PC-3 (cell line): ENCODE measurements at regions of chr10 and their contacts with region 1.

Region 1: GRCh38 chr10:73218431-73219191 is 28.4 kb downstream of the DNAJC9 start:
- DNase-seq: peak; percentile 76
- ATAC-seq: peak; percentile 90
- H3K4me3 ChIP-seq: no peak overlapping the region
- H3K27ac ChIP-seq: no peak overlapping the region
- H3K4me1 ChIP-seq: no peaks in the 10 kb centered on the region
- H3K27me3 ChIP-seq: no peaks in the 10 kb centered on the region
- CTCF ChIP-seq: peak; percentile 99

Region 2: GRCh38 chr10:73156054-73156453 is 62.6 kb before region 1 on chr10:
- CTCF ChIA-PET with region 1: no interaction called
- POLR2A ChIA-PET with region 1: no interaction called
- intact Hi-C with region 1: no loop called
- DNase-seq: no peak
- ATAC-seq: no peak
- H3K4me3 ChIP-seq: no peak overlapping the region
- H3K27ac ChIP-seq: no peak overlapping the region
- H3K4me1 ChIP-seq: no peaks in the 10 kb centered on the region
- H3K27me3 ChIP-seq: no peaks in the 10 kb centered on the region
- CTCF ChIP-seq: no peak

Region 3: GRCh38 chr10:73167783-73168464 is 50.7 kb before region 1 on chr10 and contains the starts of genes ECD and FAM149B1:
- CTCF ChIA-PET with region 1: interaction called, 5 read pairs
- POLR2A ChIA-PET with region 1: no interaction called
- intact Hi-C with region 1: loop called (anchors 1 kb)
- DNase-seq: peak; percentile 100
- ATAC-seq: peak; percentile 93
- H3K4me3 ChIP-seq: peak within 1 kb of the TSS; percentile 76
- H3K27ac ChIP-seq: peak within 1 kb of the TSS; percentile 51
- H3K4me1 ChIP-seq: peaks cover 21% of the 10 kb centered on the region
- H3K27me3 ChIP-seq: no peaks in the 10 kb centered on the region
- CTCF ChIP-seq: peak; percentile 49; the same call in 1 of the 2 replicates
- total RNA-seq, gene ECD: 103 and 108 TPM in 2 replicates
- total RNA-seq, gene FAM149B1: 34.3 and 39.1 TPM in 2 replicates

Region 4: GRCh38 chr10:73252445-73253224 is 34.0 kb after region 1 on chr10 and contains the start of gene MRPS16:
- CTCF ChIA-PET with region 1: no interaction called
- POLR2A ChIA-PET with region 1: no interaction called
- intact Hi-C with region 1: no loop called
- DNase-seq: peak; percentile 100
- ATAC-seq: peak; percentile 86
- H3K4me3 ChIP-seq: peak within 1 kb of the TSS; percentile 76
- H3K27ac ChIP-seq: peak within 1 kb of the TSS; percentile 80
- H3K4me1 ChIP-seq: peaks cover 37% of the 10 kb centered on the region
- H3K27me3 ChIP-seq: no peaks in the 10 kb centered on the region
- CTCF ChIP-seq: no peak
- total RNA-seq, gene MRPS16: 230 and 275 TPM in 2 replicates